ENCODE measurements at regions of chr10 and their contacts with region 1.

Region 1: GRCh38 chr10:28991326-28992270 is 297.3 kb upstream of the LYZL1 start:
- DNase-seq: peak; percentile 36
- ATAC-seq: peak; percentile 80 to 89

Region 2: GRCh38 chr10:28676968-28677887 is 314.4 kb before region 1 on chr10 and contains the start of gene BAMBI:
- intact Hi-C with region 1: loop called in 1 of 2 experiments (anchors 5 kb)
- DNase-seq: peak; percentile 93
- ATAC-seq: peak; percentile 98
- total RNA-seq, gene BAMBI: 23.7 to 54.8 TPM

Region 3: GRCh38 chr10:28822719-28823464 is 168.7 kb before region 1 on chr10:
- intact Hi-C with region 1: no loop called
- DNase-seq: no peak
- ATAC-seq: no peak

Region 4: GRCh38 chr10:29120237-29120636 is 128.6 kb after region 1 on chr10:
- intact Hi-C with region 1: loop called in 1 of 2 experiments (anchors 10 kb)
- DNase-seq: no peak
- ATAC-seq: peak in 1 of 2 donors; percentile 46